ENCODE measurements at regions of chr11 and their contacts with region 1.

Region 1: GRCh38 chr11:48109046-48109666 is 107.5 kb upstream of the OR4B1 start:
- DNase-seq: peak in 3 of 14 experiments; percentile 63 to 65 (median 64)
- ATAC-seq: peak; percentile 45
- H3K4me3 ChIP-seq: peak overlapping the region; percentile 45
- H3K4me3 Mint-ChIP-seq: peak overlapping the region; percentile 25
- H3K27ac ChIP-seq: peak overlapping the region in 1 of 2 donors; percentile 45
- H3K27ac Mint-ChIP-seq: peak overlapping the region; percentile 60
- H3K4me1 ChIP-seq: peaks cover 52% of the 10 kb centered on the region
- H3K4me1 Mint-ChIP-seq: peaks cover 51% of the 10 kb centered on the region
- H3K27me3 ChIP-seq: no peaks in the 10 kb centered on the region
- H3K27me3 Mint-ChIP-seq: no peaks in the 10 kb centered on the region
- CTCF ChIP-seq: no peak

Region 2: DNA sequence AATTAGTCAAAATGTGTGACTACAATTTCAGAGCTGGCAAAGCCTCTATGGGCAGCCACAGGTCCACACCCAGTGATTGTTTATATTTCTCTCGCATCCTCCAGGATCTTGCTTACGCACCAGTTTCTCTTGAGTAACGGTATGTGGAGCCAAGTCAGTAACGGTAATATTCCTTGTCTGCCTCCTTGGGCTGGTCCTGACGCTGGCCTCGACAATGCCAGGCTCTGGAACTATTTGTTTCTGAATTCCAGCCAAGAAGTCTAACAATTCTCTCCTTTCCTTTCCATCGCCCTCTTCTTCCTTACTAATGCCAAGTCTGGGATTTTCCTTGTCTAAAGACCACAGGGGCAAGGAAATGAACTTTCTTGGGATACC is 251.0 kb before region 1 on chr11:
- CTCF ChIA-PET with region 1: no interaction called
- POLR2A ChIA-PET with region 1: interaction called, 4 read pairs
- intact Hi-C with region 1: loop called in 1 of 2 experiments (anchors 5 kb)
- DNase-seq: no peak
- ATAC-seq: no peak
- H3K4me3 ChIP-seq: no peak overlapping the region
- H3K4me3 Mint-ChIP-seq: no peak overlapping the region
- H3K27ac ChIP-seq: no peak overlapping the region
- H3K27ac Mint-ChIP-seq: no peak overlapping the region
- H3K4me1 ChIP-seq: peaks cover 39% of the 10 kb centered on the region
- H3K4me1 Mint-ChIP-seq: peaks cover 47% of the 10 kb centered on the region
- H3K27me3 ChIP-seq: no peaks in the 10 kb centered on the region
- H3K27me3 Mint-ChIP-seq: no peaks in the 10 kb centered on the region
- CTCF ChIP-seq: no peak

Region 3: GRCh38 chr11:47932544-47932943 is 176.6 kb before region 1 on chr11:
- CTCF ChIA-PET with region 1: interaction called, 102 read pairs
- POLR2A ChIA-PET with region 1: interaction called, 21 read pairs
- intact Hi-C with region 1: loop called (anchors 1 kb)
- DNase-seq: no peak
- ATAC-seq: no peak
- H3K4me3 ChIP-seq: no peak overlapping the region
- H3K4me3 Mint-ChIP-seq: no peak overlapping the region
- H3K27ac ChIP-seq: no peak overlapping the region
- H3K27ac Mint-ChIP-seq: no peak overlapping the region
- H3K4me1 ChIP-seq: peaks cover 12% of the 10 kb centered on the region
- H3K4me1 Mint-ChIP-seq: peaks cover 23% of the 10 kb centered on the region
- H3K27me3 ChIP-seq: no peaks in the 10 kb centered on the region
- H3K27me3 Mint-ChIP-seq: no peaks in the 10 kb centered on the region
- CTCF ChIP-seq: no peak

Region 4: DNA sequence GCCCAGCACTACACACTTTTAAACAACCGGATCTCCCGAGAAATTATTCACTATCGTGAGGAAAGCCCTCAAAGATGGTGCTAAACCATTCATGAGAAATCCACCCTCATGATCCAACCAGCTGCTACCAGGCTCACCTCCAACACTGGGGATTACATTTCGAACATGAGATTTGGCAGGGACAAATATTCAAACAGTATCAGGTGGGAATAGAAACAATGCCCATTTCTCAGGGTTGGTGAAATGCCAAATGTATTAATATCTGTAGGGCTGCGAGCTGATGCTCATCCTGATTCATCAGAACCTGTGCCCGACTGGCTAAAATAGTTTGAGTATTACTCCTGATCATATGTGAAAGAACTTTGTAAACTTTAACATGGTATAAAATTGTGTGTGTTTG is 144.6 kb before region 1 on chr11:
- CTCF ChIA-PET with region 1: interaction called, 5 read pairs
- POLR2A ChIA-PET with region 1: interaction called, 4 read pairs
- intact Hi-C with region 1: loop called (anchors 1 kb)
- DNase-seq: no peak
- ATAC-seq: no peak
- H3K4me3 ChIP-seq: no peak overlapping the region
- H3K4me3 Mint-ChIP-seq: no peak overlapping the region
- H3K27ac ChIP-seq: no peak overlapping the region
- H3K27ac Mint-ChIP-seq: no peak overlapping the region
- H3K4me1 ChIP-seq: no peaks in the 10 kb centered on the region
- H3K4me1 Mint-ChIP-seq: no peaks in the 10 kb centered on the region
- H3K27me3 ChIP-seq: no peaks in the 10 kb centered on the region
- H3K27me3 Mint-ChIP-seq: no peaks in the 10 kb centered on the region
- CTCF ChIP-seq: no peak

Region 5: GRCh38 chr11:48020092-48020755 is 88.9 kb before region 1 on chr11:
- CTCF ChIA-PET with region 1: interaction called, 16 read pairs
- POLR2A ChIA-PET with region 1: interaction called, 3 read pairs
- intact Hi-C with region 1: no loop called
- DNase-seq: peak in 4 of 14 experiments; percentile 24 to 84 (median 75)
- ATAC-seq: peak; percentile 43
- H3K4me3 ChIP-seq: peak overlapping the region; percentile 6
- H3K4me3 Mint-ChIP-seq: peak overlapping the region; percentile 71
- H3K27ac ChIP-seq: peak overlapping the region; percentile 0 to 68
- H3K27ac Mint-ChIP-seq: peak overlapping the region; percentile 90
- H3K4me1 ChIP-seq: peaks cover 60% of the 10 kb centered on the region
- H3K4me1 Mint-ChIP-seq: peaks cover 74% of the 10 kb centered on the region
- H3K27me3 ChIP-seq: no peaks in the 10 kb centered on the region
- H3K27me3 Mint-ChIP-seq: no peaks in the 10 kb centered on the region
- CTCF ChIP-seq: no peak

Measured in CD4-positive, alpha-beta T cell (primary cell).